Activated CD4-positive, alpha-beta T cell treated with anti-CD3 and anti-CD28 coated beads for 36 hours (primary cell): ENCODE measurements at regions of chr4 and their contacts with region 1.

Region 1: GRCh38 chr4:140252742-140253555 is 99.0 kb upstream of the MAML3 start:
- DNase-seq: peak; percentile 75
- ATAC-seq: peak; percentile 57
- H3K4me3 Mint-ChIP-seq: peak overlapping the region; percentile 59
- H3K27ac Mint-ChIP-seq: peak overlapping the region; percentile 71
- H3K4me1 Mint-ChIP-seq: peaks cover 39% of the 10 kb centered on the region
- H3K27me3 Mint-ChIP-seq: peaks cover 15% of the 10 kb centered on the region

Region 2: GRCh38 chr4:139651282-139652194 is 601.4 kb before region 1 on chr4:
- CTCF ChIA-PET with region 1: interaction called, 3 read pairs
- POLR2A ChIA-PET with region 1: no interaction called
- intact Hi-C with region 1: loop called (anchors 1 to 10 kb)
- DNase-seq: peak; percentile 84
- ATAC-seq: peak; percentile 85
- H3K4me3 Mint-ChIP-seq: no peak overlapping the region
- H3K27ac Mint-ChIP-seq: peak overlapping the region; percentile 5
- H3K4me1 Mint-ChIP-seq: peaks cover 5% of the 10 kb centered on the region
- H3K27me3 Mint-ChIP-seq: no peaks in the 10 kb centered on the region

Region 3: GRCh38 chr4:139858436-139859225 is 394.3 kb before region 1 on chr4:
- CTCF ChIA-PET with region 1: no interaction called
- POLR2A ChIA-PET with region 1: no interaction called
- intact Hi-C with region 1: loop called in 1 of 2 experiments (anchors 5 kb)
- DNase-seq: peak; percentile 55
- ATAC-seq: peak; percentile 94
- H3K4me3 Mint-ChIP-seq: no peak overlapping the region
- H3K27ac Mint-ChIP-seq: no peak overlapping the region
- H3K4me1 Mint-ChIP-seq: peaks cover 32% of the 10 kb centered on the region
- H3K27me3 Mint-ChIP-seq: peaks cover 33% of the 10 kb centered on the region

Region 4: DNA sequence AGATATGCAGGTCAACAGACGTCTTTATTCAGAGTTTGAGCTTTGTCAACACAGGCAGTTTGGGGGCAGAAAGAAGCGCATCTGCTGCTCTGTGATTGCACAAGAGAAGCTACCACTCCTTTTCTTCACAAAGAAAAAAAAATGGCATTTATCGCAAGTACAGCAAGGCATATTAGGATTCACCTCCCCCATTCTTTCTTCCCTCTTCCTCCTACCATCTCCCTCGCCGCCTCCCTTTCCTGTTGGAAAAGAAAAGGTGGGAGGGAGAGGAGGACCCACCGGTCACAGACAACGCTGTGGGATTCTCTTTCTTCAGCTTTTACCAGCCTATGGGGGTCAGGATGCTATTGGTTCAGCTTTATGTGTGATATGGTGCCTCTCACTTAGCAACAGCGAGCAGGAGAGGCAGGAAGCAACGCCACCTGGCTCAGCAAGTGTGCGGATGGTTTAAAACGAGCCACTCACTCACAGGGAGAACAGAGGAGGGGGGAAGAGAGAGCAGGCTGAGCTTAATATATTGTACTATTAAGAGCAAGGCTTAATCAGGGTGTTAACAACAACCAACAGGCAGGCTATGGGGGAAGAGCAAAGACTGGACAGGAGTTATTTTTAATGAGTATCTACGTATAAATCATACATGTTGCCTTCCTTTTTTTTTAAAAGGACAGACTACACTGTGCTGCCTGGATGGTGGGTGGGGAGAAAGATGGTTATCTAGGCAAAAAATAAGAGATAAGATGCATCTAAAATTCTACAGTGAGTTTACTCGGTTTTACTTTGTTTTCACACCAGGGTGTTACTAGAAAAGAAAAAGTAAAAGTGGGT is 203.7 kb before region 1 on chr4:
- CTCF ChIA-PET with region 1: interaction called, 7 read pairs
- POLR2A ChIA-PET with region 1: no interaction called
- intact Hi-C with region 1: loop called (anchors 1 to 2 kb)
- DNase-seq: peak; percentile 71
- ATAC-seq: peak; percentile 91
- H3K4me3 Mint-ChIP-seq: peak overlapping the region; percentile 73
- H3K27ac Mint-ChIP-seq: peak overlapping the region; percentile 87
- H3K4me1 Mint-ChIP-seq: peaks cover 45% of the 10 kb centered on the region
- H3K27me3 Mint-ChIP-seq: peaks cover 8% of the 10 kb centered on the region

Region 5: DNA sequence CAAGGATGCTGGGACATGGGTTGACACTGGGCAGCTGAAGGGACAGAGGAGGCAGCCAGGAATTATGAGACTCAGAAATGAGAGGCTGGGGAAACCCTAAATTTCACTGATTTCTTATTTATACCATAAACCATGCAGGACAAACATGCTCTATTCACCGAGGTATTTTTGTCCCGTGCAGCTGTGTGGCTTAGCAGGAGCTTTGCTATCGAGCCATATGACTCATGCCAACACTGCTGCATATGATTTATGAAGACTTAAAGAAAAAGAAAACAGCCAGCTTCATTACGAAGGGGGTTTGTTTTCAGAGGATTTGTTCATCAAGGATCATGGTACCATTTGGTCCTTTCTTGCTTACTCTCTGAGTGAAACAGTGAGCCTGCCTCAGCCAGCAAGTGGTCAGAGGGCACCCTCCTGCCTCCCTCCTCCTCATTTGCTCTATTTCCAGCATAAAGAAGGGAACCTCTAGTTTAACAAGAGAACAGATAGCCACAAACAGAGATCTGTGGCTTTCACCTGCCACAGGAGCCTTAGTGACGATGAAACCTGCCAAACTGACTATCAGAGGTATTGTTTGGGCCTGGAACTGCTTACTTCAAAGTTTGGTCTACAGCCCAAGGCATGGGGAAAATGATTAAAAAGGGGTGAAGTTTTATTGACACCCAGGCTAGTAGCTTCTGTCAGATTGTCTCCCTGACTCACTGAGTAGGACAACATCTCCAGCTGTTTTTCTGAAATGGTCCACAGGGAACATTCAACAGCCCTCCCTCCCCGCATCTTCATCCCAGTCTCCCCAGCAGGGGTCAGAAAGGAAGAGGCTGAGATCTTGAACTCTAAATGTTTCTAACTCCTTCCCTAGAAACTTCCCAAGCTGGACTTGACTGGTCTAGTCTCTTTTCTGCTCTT is 18.9 kb before region 1 on chr4:
- CTCF ChIA-PET with region 1: interaction called, 26 read pairs
- POLR2A ChIA-PET with region 1: no interaction called
- intact Hi-C with region 1: no loop called
- DNase-seq: peak; percentile 33
- ATAC-seq: peak; percentile 68
- H3K4me3 Mint-ChIP-seq: no peak overlapping the region
- H3K27ac Mint-ChIP-seq: peak overlapping the region; percentile 91
- H3K4me1 Mint-ChIP-seq: peaks cover 18% of the 10 kb centered on the region
- H3K27me3 Mint-ChIP-seq: no peaks in the 10 kb centered on the region